ENCODE measurements at regions of chr1 and their contacts with region 1.

Region 1: GRCh38 chr1:32606565-32607371 is 43.6 kb downstream of the ZBTB8OS start:
- DNase-seq: no peak
- ATAC-seq: no peak
- H3K4me3 Mint-ChIP-seq: no peak overlapping the region
- H3K27ac Mint-ChIP-seq: peak overlapping the region in 1 of 10 donors; percentile 52
- H3K4me1 Mint-ChIP-seq: peaks cover 0 to 3% (median 1%) of the 10 kb centered on the region in 4 donors
- H3K27me3 Mint-ChIP-seq: no peaks in the 10 kb centered on the region

Region 2: DNA sequence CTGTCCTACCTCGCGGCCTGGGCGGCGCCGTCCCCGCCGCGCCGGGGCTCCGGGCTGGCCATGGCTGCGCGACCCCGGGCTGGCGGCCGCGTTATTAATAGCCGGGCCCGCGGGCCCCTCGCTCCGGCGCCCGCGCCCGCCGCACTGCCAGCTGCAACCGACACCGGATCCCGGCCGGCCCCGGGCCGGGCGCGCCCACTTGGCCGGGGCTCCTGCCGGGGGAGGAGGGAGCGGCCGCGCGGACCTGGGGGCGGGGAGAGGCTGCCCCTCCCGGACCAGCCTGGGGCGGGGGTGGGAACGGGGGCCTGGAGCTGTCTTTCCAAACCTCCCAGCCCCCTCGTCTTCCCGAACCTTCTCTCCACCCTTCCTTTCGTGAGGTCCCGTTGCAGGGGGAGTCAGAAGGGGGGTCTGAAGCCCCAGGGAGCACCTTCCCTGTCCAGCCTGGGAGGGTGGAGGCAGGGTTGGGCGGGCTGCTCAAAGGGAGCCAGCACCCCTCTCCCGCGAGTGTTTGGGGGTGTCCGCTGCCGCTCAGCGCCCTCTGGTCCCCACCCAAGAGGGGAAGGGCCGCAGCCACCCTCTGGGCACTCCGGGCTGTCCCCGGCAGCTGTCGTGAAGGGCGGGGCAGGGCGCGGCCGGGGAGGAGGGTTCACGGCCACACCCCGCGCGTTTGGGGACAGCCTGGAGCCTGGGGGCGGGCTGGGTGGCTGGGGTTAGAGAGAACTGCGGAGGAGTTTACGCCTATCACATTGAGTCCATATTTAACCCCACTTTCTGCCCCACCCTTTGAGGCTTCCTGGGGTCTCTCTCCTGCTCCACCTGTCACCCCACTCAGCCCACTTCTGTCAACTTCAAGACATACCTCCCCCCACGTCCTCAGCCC is 96.1 kb after region 1 on chr1 and contains the start of gene SYNC:
- POLR2A ChIA-PET with region 1: interaction called, 10 read pairs
- DNase-seq: peak in 1 of 10 donors; percentile 23
- ATAC-seq: peak; percentile 53 to 59
- H3K4me3 Mint-ChIP-seq: peak within 1 kb of the TSS; percentile 48 to 82 (median 70)
- H3K27ac Mint-ChIP-seq: peak within 1 kb of the TSS in 1 of 10 donors; percentile 19
- H3K4me1 Mint-ChIP-seq: peaks cover 7 to 14% (median 9%) of the 10 kb centered on the region in 4 donors
- H3K27me3 Mint-ChIP-seq: peaks cover 31 to 61% (median 40%) of the 10 kb centered on the region in 5 donors
- polyA plus RNA-seq, gene SYNC: not detected